Transverse colon (tissue), 4 donors: ENCODE measurements at regions of chr5 and their contacts with region 1.

Region 1: GRCh38 chr5:124773315-124774311 is 27.2 kb upstream of the ZNF608 start:
- DNase-seq: no peak
- H3K4me3 ChIP-seq: no peak overlapping the region
- H3K27ac ChIP-seq: no peak overlapping the region
- H3K4me1 ChIP-seq: no peaks in the 10 kb centered on the region
- H3K27me3 ChIP-seq: no peaks in the 10 kb centered on the region
- CTCF ChIP-seq: no peak
- EP300 ChIP-seq: no peak
- POLR2A ChIP-seq: no peak

Region 2: GRCh38 chr5:124410539-124411488 is 362.8 kb before region 1 on chr5:
- in situ Hi-C with region 1: no loop called
- intact Hi-C with region 1: no loop called
- DNase-seq: no peak
- H3K4me3 ChIP-seq: no peak overlapping the region
- H3K27ac ChIP-seq: no peak overlapping the region
- H3K4me1 ChIP-seq: no peaks in the 10 kb centered on the region
- H3K27me3 ChIP-seq: no peaks in the 10 kb centered on the region
- CTCF ChIP-seq: no peak
- EP300 ChIP-seq: no peak
- POLR2A ChIP-seq: no peak

Region 3: GRCh38 chr5:124824637-124825158 is 51.1 kb after region 1 on chr5:
- in situ Hi-C with region 1: no loop called
- intact Hi-C with region 1: no loop called
- DNase-seq: no peak
- H3K4me3 ChIP-seq: no peak overlapping the region
- H3K27ac ChIP-seq: no peak overlapping the region
- H3K4me1 ChIP-seq: peaks cover 0 to 12% (median 5%) of the 10 kb centered on the region in 4 donors
- H3K27me3 ChIP-seq: no peaks in the 10 kb centered on the region
- CTCF ChIP-seq: no peak
- EP300 ChIP-seq: no peak
- POLR2A ChIP-seq: no peak

Region 4: DNA sequence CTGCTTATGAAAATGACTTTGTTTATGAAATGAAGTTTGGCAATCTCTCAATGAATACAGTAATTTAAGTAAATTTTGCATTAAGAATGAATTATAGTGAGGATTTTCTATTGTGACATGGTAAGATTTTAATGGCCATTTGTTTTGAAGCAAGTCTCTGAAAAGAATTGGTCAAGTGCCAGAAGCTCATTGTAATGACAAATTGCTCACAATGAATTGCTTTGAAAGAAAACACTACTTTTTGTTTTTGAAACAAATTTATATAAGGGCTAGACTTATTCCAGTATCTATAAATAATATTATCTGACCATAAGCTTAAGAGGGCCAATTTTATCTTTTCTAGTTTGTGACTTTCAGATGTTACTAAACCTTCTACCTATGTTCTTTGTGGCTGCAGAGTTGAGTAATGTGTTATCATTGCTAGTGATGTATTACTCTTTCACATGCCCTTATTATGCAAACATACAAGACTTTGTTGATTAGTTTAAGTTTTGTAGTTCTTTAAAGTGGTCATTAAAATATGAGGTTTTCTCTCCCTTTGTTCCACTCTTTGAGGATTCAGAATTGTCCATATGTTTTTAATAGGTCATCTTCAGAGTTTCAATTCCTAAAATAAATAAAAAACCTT is 65.9 kb after region 1 on chr5:
- in situ Hi-C with region 1: no loop called
- intact Hi-C with region 1: loop called (anchors 10 kb)
- DNase-seq: no peak
- H3K4me3 ChIP-seq: no peak overlapping the region
- H3K27ac ChIP-seq: no peak overlapping the region
- H3K4me1 ChIP-seq: no peaks in the 10 kb centered on the region
- H3K27me3 ChIP-seq: no peaks in the 10 kb centered on the region
- CTCF ChIP-seq: no peak
- EP300 ChIP-seq: no peak
- POLR2A ChIP-seq: no peak